Brain microvascular endothelial cell (primary cell): ENCODE measurements at regions of chr3 and their contacts with region 1.

Region 1: DNA sequence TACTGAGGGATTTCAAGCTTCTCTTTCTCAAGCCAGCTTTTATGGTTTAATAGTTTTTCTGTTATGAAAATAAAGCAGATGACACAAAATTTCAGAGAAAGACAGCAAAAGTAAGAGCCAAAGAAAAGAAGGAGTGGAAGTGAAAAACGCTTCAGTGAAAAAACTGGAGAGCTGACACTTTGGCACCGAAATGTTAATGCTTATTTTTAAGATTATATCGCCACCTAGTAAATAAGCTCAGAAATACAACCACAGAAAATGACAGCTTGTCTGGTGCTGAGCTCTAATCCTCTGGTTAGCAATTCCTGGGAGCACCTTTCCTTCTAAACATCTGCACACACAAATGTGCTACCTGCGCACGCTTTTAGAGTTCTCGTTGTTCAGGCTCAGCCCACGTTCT is 101.6 kb downstream of the ZPLD1 start:
- DNase-seq: peak; percentile 16
- H3K4me3 ChIP-seq: no peak overlapping the region
- H3K27ac ChIP-seq: no peak overlapping the region
- H3K27me3 ChIP-seq: no peaks in the 10 kb centered on the region
- CTCF ChIP-seq: peak; percentile 51

Region 2: GRCh38 chr3:101803173-101803782 is 733.2 kb before region 1 on chr3:
- in situ Hi-C with region 1: loop called (anchors 25 kb)
- DNase-seq: peak; percentile 38
- H3K4me3 ChIP-seq: no peak overlapping the region
- H3K27ac ChIP-seq: no peak overlapping the region
- H3K27me3 ChIP-seq: no peaks in the 10 kb centered on the region
- CTCF ChIP-seq: peak; percentile 70

Region 3: DNA sequence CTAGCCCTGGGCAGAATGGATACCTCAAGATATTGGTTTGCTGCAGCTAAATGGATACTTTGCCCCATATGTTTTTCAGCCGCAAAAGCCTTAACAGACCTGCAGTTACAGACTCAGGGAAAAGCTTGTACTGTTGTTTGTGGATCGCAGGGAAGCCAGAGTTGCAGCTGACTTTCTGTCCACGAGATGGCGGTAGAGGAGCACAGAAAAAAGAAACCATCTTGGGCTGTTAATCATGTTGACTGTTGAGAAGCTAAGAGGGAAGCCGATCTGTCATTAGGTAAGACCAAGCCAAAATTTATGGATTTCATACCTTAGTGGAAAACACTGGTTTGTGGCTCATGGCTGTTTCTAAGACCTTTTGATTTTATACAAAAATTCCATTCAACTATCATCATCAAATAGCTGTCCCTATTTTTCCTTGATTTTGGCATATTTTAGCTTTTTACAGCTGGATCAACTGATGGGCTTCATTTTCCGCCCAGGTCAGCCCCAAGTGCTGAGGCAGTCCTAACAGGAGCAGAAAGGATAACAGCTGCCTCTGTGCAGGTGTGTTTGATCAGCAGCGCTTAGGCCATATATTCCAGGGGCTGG is 307.3 kb before region 1 on chr3:
- in situ Hi-C with region 1: loop called (anchors 25 kb)
- DNase-seq: peak; percentile 81
- H3K4me3 ChIP-seq: no peak overlapping the region
- H3K27ac ChIP-seq: no peak overlapping the region
- H3K27me3 ChIP-seq: no peaks in the 10 kb centered on the region
- CTCF ChIP-seq: peak; percentile 94

Region 4: GRCh38 chr3:103089758-103090157 is 553.3 kb after region 1 on chr3:
- in situ Hi-C with region 1: no loop called
- DNase-seq: no peak
- H3K4me3 ChIP-seq: no peak overlapping the region
- H3K27ac ChIP-seq: no peak overlapping the region
- H3K27me3 ChIP-seq: no peaks in the 10 kb centered on the region
- CTCF ChIP-seq: no peak